ENCODE measurements at regions of chr17 and their contacts with region 1.

Region 1: GRCh38 chr17:75632863-75633485 is at the start of gene SMIM5:
- DNase-seq: peak; percentile 86 to 91
- H3K4me3 ChIP-seq: no peak within 1 kb of the TSS
- H3K4me3 Mint-ChIP-seq: peak within 1 kb of the TSS; percentile 41
- H3K27ac Mint-ChIP-seq: peak within 1 kb of the TSS; percentile 70
- H3K4me1 ChIP-seq: peaks cover 19% of the 10 kb centered on the region
- H3K4me1 Mint-ChIP-seq: peaks cover 9% of the 10 kb centered on the region
- H3K27me3 ChIP-seq: no peaks in the 10 kb centered on the region
- H3K27me3 Mint-ChIP-seq: no peaks in the 10 kb centered on the region
- CTCF ChIP-seq: peak; percentile 95 to 98
- total RNA-seq, gene SMIM5: 0.20 TPM in 1 of 2 replicates, not detected in the other

Region 2: GRCh38 chr17:75524953-75525719 is 107.8 kb before region 1 on chr17 and contains the start of gene LLGL2:
- CTCF ChIA-PET with region 1: interaction called, 11 read pairs
- POLR2A ChIA-PET with region 1: interaction called, 3 read pairs
- intact Hi-C with region 1: no loop called
- DNase-seq: peak; percentile 95 to 98
- H3K4me3 ChIP-seq: peak within 1 kb of the TSS; percentile 68
- H3K4me3 Mint-ChIP-seq: peak within 1 kb of the TSS; percentile 92
- H3K27ac Mint-ChIP-seq: peak within 1 kb of the TSS; percentile 76
- H3K4me1 ChIP-seq: peaks cover 5% of the 10 kb centered on the region; the same call in 1 of the 2 replicates
- H3K4me1 Mint-ChIP-seq: peaks cover 16% of the 10 kb centered on the region
- H3K27me3 ChIP-seq: no peaks in the 10 kb centered on the region
- H3K27me3 Mint-ChIP-seq: no peaks in the 10 kb centered on the region
- CTCF ChIP-seq: peak; percentile 47 to 54
- total RNA-seq, gene LLGL2: 165 and 179 TPM in 2 replicates

Region 3: GRCh38 chr17:75619506-75620431 is 13.2 kb before region 1 on chr17:
- CTCF ChIA-PET with region 1: interaction called, 24 read pairs
- POLR2A ChIA-PET with region 1: no interaction called
- intact Hi-C with region 1: no loop called
- DNase-seq: peak; percentile 73 to 78
- H3K4me3 ChIP-seq: no peak overlapping the region
- H3K4me3 Mint-ChIP-seq: no peak overlapping the region
- H3K27ac Mint-ChIP-seq: no peak overlapping the region
- H3K4me1 ChIP-seq: peaks cover 11% of the 10 kb centered on the region; the same call in 1 of the 2 replicates
- H3K4me1 Mint-ChIP-seq: peaks cover 11% of the 10 kb centered on the region
- H3K27me3 ChIP-seq: no peaks in the 10 kb centered on the region
- H3K27me3 Mint-ChIP-seq: no peaks in the 10 kb centered on the region
- CTCF ChIP-seq: peak; percentile 59 to 76

Region 4: GRCh38 chr17:75652915-75653549 is 20.1 kb after region 1 on chr17:
- CTCF ChIA-PET with region 1: interaction called, 143 read pairs
- POLR2A ChIA-PET with region 1: interaction called, 3 read pairs
- intact Hi-C with region 1: loop called (anchors 1 kb)
- DNase-seq: peak; percentile 60 to 73
- H3K4me3 ChIP-seq: no peak overlapping the region
- H3K4me3 Mint-ChIP-seq: no peak overlapping the region
- H3K27ac Mint-ChIP-seq: no peak overlapping the region
- H3K4me1 ChIP-seq: no peaks in the 10 kb centered on the region
- H3K4me1 Mint-ChIP-seq: no peaks in the 10 kb centered on the region
- H3K27me3 ChIP-seq: no peaks in the 10 kb centered on the region
- H3K27me3 Mint-ChIP-seq: no peaks in the 10 kb centered on the region
- CTCF ChIP-seq: peak; percentile 87 to 95

Region 5: DNA sequence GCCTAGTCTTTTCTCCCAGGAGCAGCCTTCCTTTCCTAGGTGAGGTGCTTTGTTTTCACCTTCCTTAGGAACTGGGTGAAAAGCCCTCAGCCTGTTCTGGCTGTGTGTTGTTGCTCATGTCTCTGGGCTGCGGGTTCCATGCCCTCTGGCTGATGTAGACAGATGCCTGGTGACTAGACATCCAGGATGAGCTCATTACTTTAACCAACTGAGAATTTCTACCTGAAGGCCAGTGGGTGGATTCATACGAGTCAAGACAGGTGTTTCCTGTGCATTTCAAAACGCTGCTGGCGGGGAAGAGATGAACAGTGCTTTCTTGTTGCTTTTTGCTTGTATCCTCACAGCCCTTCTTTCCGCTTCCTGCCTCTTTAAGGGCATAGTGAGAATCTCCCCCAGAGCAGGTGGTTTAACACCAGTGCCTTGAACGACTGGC is 56.5 kb after region 1 on chr17:
- CTCF ChIA-PET with region 1: no interaction called
- POLR2A ChIA-PET with region 1: no interaction called
- intact Hi-C with region 1: no loop called
- DNase-seq: no peak
- H3K4me3 ChIP-seq: no peak overlapping the region
- H3K4me3 Mint-ChIP-seq: no peak overlapping the region
- H3K27ac Mint-ChIP-seq: peak overlapping the region; percentile 49
- H3K4me1 ChIP-seq: peaks cover 16% of the 10 kb centered on the region
- H3K4me1 Mint-ChIP-seq: peaks cover 20% of the 10 kb centered on the region
- H3K27me3 ChIP-seq: no peaks in the 10 kb centered on the region
- H3K27me3 Mint-ChIP-seq: no peaks in the 10 kb centered on the region
- CTCF ChIP-seq: no peak

Region 6: DNA sequence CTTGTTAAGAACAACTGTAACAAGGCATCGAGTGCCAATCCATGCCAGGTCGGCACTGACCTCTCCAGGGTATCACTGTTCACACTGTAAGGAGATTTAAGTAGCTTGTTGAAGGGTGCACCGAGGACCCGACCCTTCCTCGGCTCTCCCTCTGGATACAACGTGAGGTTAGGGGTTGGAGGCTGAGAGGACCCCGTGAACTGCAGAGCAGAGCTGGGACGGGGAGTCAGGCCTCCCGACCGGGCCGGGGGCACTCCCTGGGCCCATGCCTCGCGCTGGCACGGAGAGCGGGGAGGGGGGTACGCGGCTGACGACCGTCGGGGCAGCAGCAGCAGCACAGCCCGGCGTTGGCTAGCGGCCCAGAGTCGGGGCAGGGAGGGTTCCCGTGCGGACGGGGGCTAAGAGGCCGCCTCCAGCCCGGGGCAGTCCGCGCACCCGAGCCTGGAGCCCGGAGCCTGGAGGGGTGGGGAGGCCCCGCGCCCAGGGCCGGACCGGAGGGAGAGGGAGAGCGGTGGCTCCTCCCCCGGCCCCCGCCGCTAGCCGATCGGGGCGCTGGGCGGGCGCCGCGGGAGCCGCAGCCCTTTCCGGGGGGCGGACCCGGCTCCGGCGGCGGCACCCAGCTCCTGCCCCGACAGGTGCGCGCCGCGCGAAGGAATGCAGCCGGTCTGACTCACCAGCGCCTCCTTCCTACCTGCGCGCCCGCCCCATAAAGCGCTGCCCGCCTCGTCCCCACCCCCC is 87.9 kb after region 1 on chr17 and contains the start of gene ITGB4:
- CTCF ChIA-PET with region 1: interaction called, 16 read pairs
- POLR2A ChIA-PET with region 1: no interaction called
- intact Hi-C with region 1: no loop called
- DNase-seq: peak; percentile 93 to 94
- H3K4me3 ChIP-seq: peak within 1 kb of the TSS; percentile 91
- H3K4me3 Mint-ChIP-seq: peak within 1 kb of the TSS; percentile 86
- H3K27ac Mint-ChIP-seq: peak within 1 kb of the TSS; percentile 85
- H3K4me1 ChIP-seq: peaks cover 25% of the 10 kb centered on the region
- H3K4me1 Mint-ChIP-seq: peaks cover 19% of the 10 kb centered on the region
- H3K27me3 ChIP-seq: no peaks in the 10 kb centered on the region
- H3K27me3 Mint-ChIP-seq: no peaks in the 10 kb centered on the region
- CTCF ChIP-seq: peak; percentile 18 to 24
- total RNA-seq, gene ITGB4: 50.8 and 55.4 TPM in 2 replicates